Activated naive CD4-positive, alpha-beta T cell treated with anti-CD3 and anti-CD28 coated beads, Interleukin-2, amount 10 ng/mL, durations not matched to agents 7 days and 5 days (primary cell): ENCODE measurements at regions of chr7 and their contacts with region 1.

Region 1: DNA sequence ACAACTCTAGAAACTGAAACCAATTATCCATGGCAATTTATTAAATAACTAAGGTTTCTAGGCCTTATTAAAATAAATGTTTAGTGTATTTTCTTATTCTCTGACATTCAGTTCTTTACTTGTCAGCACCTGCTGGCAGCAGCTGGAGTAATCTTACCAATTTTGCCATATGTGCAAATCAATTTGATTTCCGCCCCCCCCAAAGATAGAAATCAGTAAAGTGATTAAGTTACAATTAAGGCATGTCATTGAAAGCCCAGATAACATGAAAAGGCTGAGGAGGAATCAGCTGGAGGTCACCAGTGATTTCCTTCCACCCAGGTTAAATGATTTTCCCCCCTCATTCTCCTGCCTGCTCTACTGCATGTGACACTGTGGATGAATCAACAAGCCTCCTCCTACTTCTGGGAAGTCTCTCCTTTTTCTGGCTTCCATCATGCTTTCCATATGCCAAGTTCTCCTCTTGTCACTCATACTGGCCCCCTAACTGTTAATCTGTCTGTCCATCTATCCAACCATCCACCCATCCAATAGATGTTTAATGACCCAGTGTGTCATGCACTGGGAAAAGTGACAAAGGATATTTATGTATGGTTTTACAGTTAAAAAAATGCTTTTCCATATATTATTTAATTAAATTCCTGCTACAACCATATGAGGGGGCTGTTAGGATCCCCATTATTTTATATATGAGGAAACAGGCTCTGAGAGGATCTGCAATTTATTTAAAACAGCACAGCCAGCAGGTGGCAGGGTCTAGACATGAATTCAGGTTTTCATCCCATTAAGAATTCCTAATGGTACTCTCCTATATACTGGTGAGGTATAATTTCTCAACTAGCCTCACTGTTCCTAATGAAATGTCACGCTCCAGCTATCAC is 116.5 kb downstream of the ATXN7L1 start:
- DNase-seq: peak; percentile 38
- H3K4me3 Mint-ChIP-seq: no peak overlapping the region
- H3K27ac Mint-ChIP-seq: peak overlapping the region; percentile 20
- H3K4me1 Mint-ChIP-seq: peaks cover 40% of the 10 kb centered on the region
- H3K27me3 Mint-ChIP-seq: peaks cover 14% of the 10 kb centered on the region

Region 2: GRCh38 chr7:105621617-105622016 is 138.3 kb before region 1 on chr7:
- CTCF ChIA-PET with region 1: no interaction called
- DNase-seq: no peak
- H3K4me3 Mint-ChIP-seq: no peak overlapping the region
- H3K27ac Mint-ChIP-seq: no peak overlapping the region
- H3K4me1 Mint-ChIP-seq: no peaks in the 10 kb centered on the region
- H3K27me3 Mint-ChIP-seq: no peaks in the 10 kb centered on the region

Region 3: DNA sequence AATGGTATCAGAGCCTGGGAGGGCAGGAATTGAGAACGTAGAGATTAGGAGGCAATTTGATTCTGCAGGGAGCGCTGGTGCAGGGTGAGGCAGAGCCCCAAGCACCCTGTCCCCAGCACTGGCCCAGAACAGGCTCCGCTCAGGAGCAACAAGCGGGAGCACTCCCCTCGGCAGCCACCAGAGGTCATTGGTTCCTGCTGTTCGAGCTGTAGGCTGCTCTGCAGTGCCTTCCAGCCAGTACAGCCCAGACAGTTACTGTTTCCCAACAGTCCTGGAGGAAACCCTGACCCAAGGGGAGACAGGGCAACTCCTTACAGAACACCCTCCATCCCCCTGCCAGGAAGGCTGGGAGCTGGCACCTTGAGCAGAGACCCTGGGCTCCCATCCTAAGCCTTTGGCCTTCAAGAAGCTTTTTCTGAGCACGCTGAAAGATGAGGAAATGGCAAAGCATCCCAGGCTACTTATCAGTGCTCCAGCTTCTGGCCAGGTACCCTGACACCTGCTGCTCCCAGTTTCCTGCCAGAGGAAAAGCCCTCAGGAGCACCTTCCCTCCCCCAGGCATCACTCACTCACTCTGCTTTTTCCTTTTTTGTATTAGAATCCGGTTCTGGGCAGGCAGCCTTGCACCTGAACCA is 107.4 kb before region 1 on chr7:
- CTCF ChIA-PET with region 1: interaction called, 31 read pairs
- DNase-seq: peak; percentile 79
- H3K4me3 Mint-ChIP-seq: no peak overlapping the region
- H3K27ac Mint-ChIP-seq: no peak overlapping the region
- H3K4me1 Mint-ChIP-seq: peaks cover 12% of the 10 kb centered on the region
- H3K27me3 Mint-ChIP-seq: no peaks in the 10 kb centered on the region

Region 4: DNA sequence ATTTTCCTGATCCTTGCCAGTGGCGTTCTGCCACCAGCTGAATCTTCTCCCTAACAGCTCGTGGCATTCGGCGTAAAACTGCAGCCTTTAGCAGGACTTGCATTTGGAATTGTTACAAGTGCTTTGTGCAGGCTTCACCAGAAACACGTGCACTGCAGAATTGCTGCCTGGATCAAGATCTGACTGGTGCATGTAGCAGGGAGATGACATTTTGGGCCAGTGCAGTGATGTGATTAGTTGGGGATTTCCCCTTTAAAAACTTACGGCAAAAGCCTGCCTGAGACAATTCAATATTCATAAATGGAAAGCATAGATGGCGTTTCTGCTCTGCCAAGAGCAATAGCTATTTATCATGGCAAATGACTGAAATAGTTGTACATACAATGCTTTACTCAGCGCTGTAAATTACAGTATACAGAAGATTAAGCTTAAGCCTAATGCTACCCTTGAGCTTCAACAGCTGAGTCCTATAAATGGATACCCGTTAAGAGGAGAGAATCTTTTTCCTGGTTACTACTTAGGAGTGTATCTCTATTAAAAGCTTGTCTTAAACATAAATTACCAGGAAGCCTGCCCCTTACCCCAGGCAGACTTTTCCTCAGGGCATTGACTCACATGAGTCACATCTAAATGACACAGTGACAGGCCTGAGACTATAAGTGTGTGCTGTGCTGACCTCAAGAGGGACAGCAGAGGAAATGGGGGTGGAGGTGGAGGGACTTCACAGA is 10.2 kb after region 1 on chr7:
- CTCF ChIA-PET with region 1: interaction called, 11 read pairs
- DNase-seq: no peak
- H3K4me3 Mint-ChIP-seq: no peak overlapping the region
- H3K27ac Mint-ChIP-seq: no peak overlapping the region
- H3K4me1 Mint-ChIP-seq: peaks cover 3% of the 10 kb centered on the region
- H3K27me3 Mint-ChIP-seq: peaks cover 6% of the 10 kb centered on the region

Region 5: DNA sequence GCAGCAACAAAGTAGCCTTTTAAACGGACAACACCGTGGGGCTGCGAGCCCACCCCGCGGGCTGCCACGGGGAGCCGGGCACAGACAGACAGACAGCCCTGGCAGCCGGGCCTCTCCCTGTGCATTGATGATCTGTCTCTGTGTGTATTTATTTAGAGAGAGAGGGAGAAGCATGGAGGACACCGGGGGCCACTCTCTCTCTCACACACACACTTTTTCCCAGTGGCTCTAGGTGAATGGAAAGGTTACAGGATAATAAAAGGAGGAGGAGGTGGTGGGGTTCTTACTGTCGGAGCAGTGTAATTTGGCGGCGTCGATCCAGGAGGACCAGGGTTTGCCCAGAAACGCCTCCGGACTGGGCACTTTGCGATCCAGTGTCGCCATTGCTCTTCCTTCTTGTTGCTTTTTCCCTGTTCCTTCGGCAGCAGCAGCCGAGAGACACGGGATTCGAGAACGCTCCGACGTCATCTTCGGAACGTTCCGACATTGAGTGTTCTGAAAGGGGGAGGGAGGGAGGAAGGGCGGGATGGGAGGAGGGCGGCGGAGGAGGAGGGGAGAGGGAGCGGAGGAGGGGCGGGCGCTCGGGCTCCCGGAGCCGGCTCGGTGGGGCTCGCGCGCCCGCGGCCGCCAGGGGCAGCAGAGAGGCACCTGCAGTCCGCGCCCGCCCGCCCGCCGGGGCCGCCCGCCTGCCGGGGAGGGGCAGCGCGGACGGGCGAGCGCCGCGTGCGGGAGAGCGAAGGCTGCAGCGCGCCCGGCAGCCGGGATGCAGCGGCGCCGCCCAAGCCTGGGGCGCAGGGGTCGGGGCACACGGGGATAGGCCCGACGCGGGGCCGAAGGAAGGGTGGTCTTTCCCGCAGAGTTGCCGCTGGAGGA is 116.4 kb after region 1 on chr7 and contains the start of gene ATXN7L1:
- CTCF ChIA-PET with region 1: interaction called, 22 read pairs
- DNase-seq: peak; percentile 93
- H3K4me3 Mint-ChIP-seq: peak within 1 kb of the TSS; percentile 99
- H3K27ac Mint-ChIP-seq: peak within 1 kb of the TSS; percentile 86
- H3K4me1 Mint-ChIP-seq: peaks cover 41% of the 10 kb centered on the region
- H3K27me3 Mint-ChIP-seq: peaks cover 24% of the 10 kb centered on the region

Region 6: DNA sequence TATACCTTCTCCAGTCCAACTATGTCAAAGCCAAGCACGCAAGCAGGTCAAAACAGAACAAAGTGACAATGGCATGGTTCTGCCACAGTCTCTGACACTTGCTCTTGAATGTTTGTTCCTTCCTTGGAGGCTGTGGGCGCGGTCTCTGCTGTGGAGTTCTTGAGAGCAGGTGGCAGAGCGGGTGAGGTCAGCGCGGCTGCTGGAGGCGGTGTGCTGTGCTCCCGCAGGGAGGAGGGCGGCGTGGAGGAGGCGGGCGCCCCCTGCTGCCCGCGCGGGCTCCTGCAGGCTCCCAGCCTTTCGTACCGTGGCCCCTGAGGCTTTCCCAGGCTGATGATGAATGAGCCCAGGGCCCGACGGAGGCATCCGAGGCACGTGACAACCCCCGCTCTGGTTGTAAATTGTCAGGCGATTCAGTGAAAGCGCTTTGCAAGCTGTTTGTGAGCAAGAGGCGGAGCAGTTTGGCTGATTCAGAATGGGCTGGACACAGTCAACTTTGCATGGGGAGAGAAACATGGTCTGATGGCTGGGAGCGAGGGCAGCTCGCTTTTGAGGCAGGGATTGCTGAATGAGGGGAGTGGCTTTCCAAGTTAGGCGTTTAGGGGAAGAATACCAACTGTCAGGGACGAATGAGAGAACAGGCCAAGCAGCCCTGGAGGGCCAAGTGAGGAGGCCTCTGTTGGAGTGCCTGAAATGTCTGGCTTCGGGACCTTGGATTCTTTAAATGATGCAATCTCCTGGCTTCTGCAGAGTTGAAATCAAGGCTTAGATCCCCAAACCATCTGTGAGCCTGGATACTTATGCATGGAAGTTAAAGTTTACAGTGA is 249.7 kb after region 1 on chr7:
- CTCF ChIA-PET with region 1: interaction called, 101 read pairs
- DNase-seq: peak; percentile 84
- H3K4me3 Mint-ChIP-seq: no peak overlapping the region
- H3K27ac Mint-ChIP-seq: no peak overlapping the region
- H3K4me1 Mint-ChIP-seq: peaks cover 39% of the 10 kb centered on the region
- H3K27me3 Mint-ChIP-seq: peaks cover 39% of the 10 kb centered on the region

Region 7: GRCh38 chr7:106153891-106154449 is 394.1 kb after region 1 on chr7:
- CTCF ChIA-PET with region 1: interaction called, 10 read pairs
- DNase-seq: peak; percentile 82
- H3K4me3 Mint-ChIP-seq: no peak overlapping the region
- H3K27ac Mint-ChIP-seq: no peak overlapping the region
- H3K4me1 Mint-ChIP-seq: peaks cover 17% of the 10 kb centered on the region
- H3K27me3 Mint-ChIP-seq: peaks cover 36% of the 10 kb centered on the region